Left ventricle myocardium inferior (tissue), 1 donor: ENCODE measurements at regions of chr16 and their contacts with region 1.

Region 1: GRCh38 chr16:55842369-55843104 is 9.6 kb upstream of the CES1 start:
- DNase-seq: no peak
- H3K4me3 ChIP-seq: no peak overlapping the region
- H3K27ac ChIP-seq: no peak overlapping the region
- H3K4me1 ChIP-seq: no peaks in the 10 kb centered on the region
- H3K27me3 ChIP-seq: peaks cover 58% of the 10 kb centered on the region
- CTCF ChIP-seq: peak; percentile 84

Region 2: DNA sequence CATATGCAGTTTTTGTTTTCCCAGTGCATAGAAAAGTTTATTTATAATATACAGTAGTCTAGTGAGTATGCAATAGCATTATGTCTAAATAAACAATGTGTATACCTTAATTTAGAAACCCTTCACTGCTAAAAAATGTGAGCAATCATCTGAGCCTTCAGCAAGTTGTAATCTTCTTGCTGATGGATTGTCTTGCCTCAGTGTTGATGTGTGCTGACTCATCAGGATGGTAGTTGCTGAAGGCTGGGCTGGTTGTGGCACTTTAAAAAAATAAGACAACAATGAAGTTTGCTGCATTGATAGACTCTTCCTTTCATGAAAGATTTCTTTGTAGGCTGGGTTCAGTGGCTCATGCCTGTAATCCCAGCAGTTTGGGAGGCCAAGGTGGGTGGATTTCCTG is 289.9 kb before region 1 on chr16:
- intact Hi-C with region 1: no loop called
- DNase-seq: no peak
- H3K4me3 ChIP-seq: no peak overlapping the region
- H3K27ac ChIP-seq: no peak overlapping the region
- H3K4me1 ChIP-seq: no peaks in the 10 kb centered on the region
- H3K27me3 ChIP-seq: no peaks in the 10 kb centered on the region
- CTCF ChIP-seq: no peak

Region 3: DNA sequence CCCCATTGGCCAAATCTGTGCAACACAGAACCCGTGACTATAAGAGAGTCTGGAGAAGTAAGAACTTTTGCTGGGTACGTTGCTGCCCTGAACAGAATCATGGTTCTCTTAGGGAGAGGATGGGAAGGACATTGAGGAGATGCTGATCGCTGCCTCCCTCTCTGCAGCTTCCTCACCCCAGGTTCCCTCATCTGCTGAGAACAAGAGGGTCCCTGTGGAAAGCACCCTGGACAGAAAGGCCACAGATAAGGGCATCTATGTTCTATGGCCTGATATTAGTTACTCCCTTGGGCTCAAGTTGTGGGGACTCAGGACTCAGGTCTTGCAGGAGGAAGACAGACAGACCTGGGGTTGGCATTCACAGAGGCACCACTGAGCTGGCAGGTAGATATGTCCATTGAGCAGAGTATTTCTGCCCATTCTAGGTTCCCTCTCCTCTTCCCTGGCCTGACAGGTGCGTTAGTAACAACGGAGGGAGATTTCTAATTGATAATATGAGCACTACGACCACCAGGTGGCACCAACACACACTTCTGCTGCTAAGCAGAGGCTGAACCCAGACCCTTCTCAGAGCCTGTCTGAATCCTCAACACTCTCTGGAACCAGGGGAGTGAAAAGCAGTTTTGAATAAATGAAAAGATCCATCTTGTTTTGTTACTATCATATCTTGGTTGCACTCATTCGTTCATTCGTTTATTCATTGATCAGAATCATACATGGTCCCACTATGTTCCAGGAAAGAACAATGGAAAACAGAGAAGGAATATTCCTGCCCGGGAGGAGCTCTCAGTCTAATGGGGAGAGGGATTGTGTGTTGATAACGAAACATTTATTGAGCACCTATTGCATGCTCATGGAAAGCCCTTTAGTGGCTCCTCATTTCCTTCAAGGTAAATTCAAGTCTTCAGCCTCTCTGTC is 130.3 kb before region 1 on chr16:
- intact Hi-C with region 1: loop called (anchors 2 kb)
- DNase-seq: peak; percentile 58
- H3K4me3 ChIP-seq: no peak overlapping the region
- H3K27ac ChIP-seq: no peak overlapping the region
- H3K4me1 ChIP-seq: no peaks in the 10 kb centered on the region
- H3K27me3 ChIP-seq: peaks cover 90% of the 10 kb centered on the region
- CTCF ChIP-seq: peak; percentile 75